AG04449 (cell line): ENCODE measurements at regions of chr1 and their contacts with region 1.

Region 1: DNA sequence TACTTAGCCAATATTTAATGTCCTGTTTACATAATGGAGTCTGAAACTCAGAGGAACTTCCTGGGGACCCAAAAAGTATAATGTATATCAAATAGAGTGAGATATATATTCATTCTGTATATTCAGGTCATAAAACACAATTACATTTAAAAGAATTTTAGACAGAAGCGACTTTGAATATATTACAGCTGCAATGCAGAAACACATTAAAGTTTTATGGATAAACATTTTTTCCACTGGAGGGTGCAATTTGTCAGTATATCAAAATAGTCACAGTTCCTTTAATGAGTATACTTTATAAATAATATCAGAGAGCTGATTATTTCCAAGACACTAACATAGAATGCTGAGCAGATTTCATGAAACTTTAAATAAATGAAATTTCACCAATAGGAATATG is 43.9 kb upstream of the CRB1 start:
- DNase-seq: no peak
- H3K4me3 ChIP-seq: no peak overlapping the region
- CTCF ChIP-seq: no peak

Region 2: DNA sequence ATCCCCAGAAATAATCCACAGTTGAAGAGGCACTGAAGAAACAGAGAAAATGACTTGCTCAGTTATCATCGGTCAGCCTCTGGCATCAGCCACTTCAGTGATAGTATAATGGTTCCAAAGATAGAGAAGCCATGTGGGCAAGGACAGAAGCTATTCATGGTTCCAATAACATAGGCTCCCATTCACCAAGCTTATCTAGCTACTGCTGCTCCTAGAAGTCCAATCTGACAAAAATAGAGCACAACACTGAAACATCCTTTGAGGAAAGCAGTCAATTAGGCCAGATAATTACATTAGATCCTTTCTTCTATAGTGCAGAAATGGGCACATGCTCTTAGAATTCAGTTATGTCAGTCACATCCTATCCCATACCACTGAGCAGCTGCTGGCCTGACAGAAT is 10.4 kb after region 1 on chr1:
- CTCF ChIA-PET with region 1: interaction called, 17 read pairs
- POLR2A ChIA-PET with region 1: no interaction called
- DNase-seq: no peak
- H3K4me3 ChIP-seq: no peak overlapping the region
- CTCF ChIP-seq: no peak